Endothelial cell of umbilical vein (primary cell): ENCODE measurements at regions of chr10 and their contacts with region 1.

Region 1: GRCh38 chr10:70363971-70364771 is 18.3 kb downstream of the LRRC20 start:
- DNase-seq: peak; percentile 79
- H3K4me3 ChIP-seq: no peak overlapping the region
- H3K27ac ChIP-seq: no peak overlapping the region
- H3K4me1 ChIP-seq: no peaks in the 10 kb centered on the region
- H3K27me3 ChIP-seq: no peaks in the 10 kb centered on the region
- CTCF ChIP-seq: peak; percentile 82 to 95
- POLR2A ChIP-seq: no peak

Region 2: DNA sequence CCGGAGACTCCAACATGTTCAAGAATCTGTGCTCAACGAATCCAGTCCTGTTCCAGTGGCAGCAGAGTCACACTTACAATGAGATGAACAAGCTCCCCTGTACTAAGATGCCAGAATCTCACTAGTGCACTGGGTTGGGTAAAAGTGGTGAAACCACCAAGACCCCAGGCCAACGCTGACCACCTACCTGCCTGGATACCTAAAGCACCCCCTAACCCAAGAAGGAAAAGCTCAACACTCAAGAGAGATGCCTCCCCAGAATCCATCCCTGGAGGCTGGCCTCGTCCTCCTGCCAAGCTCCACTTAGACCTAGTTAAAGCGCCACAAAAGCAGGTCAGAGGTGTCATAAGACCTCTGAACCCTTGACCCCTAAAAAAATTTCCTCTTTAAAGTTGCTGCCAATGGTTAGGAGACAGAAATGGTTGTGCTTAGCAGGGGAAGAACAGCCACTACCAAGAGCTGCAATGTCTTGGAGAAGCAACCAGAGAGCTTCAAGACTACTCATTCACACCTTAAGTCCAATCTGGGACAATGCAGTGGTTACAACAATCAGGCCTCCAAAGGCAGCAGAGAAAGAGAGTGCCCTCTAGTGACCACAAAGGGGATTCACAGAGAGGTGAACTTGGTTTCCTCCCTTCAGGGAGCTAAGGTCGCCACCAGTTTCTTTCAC is 406.1 kb before region 1 on chr10:
- CTCF ChIA-PET with region 1: interaction called, 4 read pairs
- POLR2A ChIA-PET with region 1: no interaction called
- dilution Hi-C with region 1: no loop called
- intact Hi-C with region 1: loop called (anchors 10 kb)
- DNase-seq: peak; percentile 43
- H3K4me3 ChIP-seq: no peak overlapping the region
- H3K27ac ChIP-seq: no peak overlapping the region
- H3K4me1 ChIP-seq: no peaks in the 10 kb centered on the region
- H3K27me3 ChIP-seq: no peaks in the 10 kb centered on the region
- CTCF ChIP-seq: peak; percentile 85 to 90
- POLR2A ChIP-seq: no peak

Region 3: DNA sequence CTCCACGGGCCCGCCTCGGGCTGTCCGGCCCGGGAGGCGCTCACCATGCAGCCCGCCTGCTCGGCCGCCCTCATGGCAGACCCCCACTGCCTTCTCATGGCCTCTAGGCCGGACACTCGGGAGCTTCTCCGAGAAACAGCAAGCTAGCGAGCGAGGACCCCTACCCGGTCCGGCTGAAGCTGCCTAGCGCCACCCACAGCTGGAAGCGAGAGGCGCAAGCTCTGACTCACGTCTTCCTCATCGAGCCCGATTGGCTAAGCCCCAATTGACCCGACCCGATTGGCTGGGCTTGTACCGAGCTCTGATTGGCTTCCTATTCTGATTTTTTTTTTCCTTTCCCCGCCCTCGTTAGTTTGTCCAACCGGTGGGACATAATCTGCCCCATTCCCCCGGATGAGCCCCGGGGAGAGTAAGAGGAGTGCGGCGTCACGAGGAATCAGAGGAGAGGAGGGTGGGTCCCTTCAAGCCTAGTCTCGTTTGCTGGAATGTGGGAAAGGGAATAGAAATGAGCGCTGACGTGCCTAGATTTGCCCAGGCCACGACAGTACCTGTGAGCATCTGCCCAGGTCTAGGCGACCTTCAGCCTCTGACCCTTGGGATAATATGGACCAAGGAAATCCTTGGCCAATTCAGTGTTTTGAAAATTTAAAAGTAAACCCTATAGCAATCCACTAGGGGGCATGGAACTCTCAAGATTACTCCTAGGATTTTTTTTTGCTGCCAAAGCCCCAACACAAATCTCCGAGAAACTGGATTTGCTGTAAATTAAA is 217.5 kb before region 1 on chr10 and contains the start of gene TYSND1:
- CTCF ChIA-PET with region 1: interaction called, 25 read pairs
- POLR2A ChIA-PET with region 1: no interaction called
- dilution Hi-C with region 1: no loop called
- intact Hi-C with region 1: loop called (anchors 1 kb)
- DNase-seq: peak; percentile 98
- H3K4me3 ChIP-seq: peak within 1 kb of the TSS; percentile 58 to 64 (median 64)
- H3K27ac ChIP-seq: peak within 1 kb of the TSS; percentile 45
- H3K4me1 ChIP-seq: peaks cover 11% of the 10 kb centered on the region
- H3K27me3 ChIP-seq: no peaks in the 10 kb centered on the region
- CTCF ChIP-seq: peak; percentile 66 to 87
- POLR2A ChIP-seq: peak; percentile 91
- total RNA-seq, gene TYSND1: 6.7 and 7.8 TPM in 2 replicates

Region 4: GRCh38 chr10:70233109-70233938 is 130.8 kb before region 1 on chr10 and contains the start of gene PPA1:
- CTCF ChIA-PET with region 1: interaction called, 50 read pairs
- POLR2A ChIA-PET with region 1: interaction called, 3 read pairs
- dilution Hi-C with region 1: no loop called
- intact Hi-C with region 1: loop called (anchors 1 kb)
- DNase-seq: peak; percentile 96
- H3K4me3 ChIP-seq: peak within 1 kb of the TSS; percentile 72 to 91 (median 80)
- H3K27ac ChIP-seq: peak within 1 kb of the TSS; percentile 58
- H3K4me1 ChIP-seq: peaks cover 11% of the 10 kb centered on the region
- H3K27me3 ChIP-seq: no peaks in the 10 kb centered on the region
- CTCF ChIP-seq: peak in 1 of 2 donors; percentile 9
- POLR2A ChIP-seq: peak; percentile 95
- total RNA-seq, gene PPA1: 115 and 140 TPM in 2 replicates

Region 5: GRCh38 chr10:70267161-70267933 is 96.8 kb before region 1 on chr10:
- CTCF ChIA-PET with region 1: interaction called, 30 read pairs
- POLR2A ChIA-PET with region 1: no interaction called
- dilution Hi-C with region 1: no loop called
- intact Hi-C with region 1: loop called (anchors 2 kb)
- DNase-seq: peak; percentile 25
- H3K4me3 ChIP-seq: no peak overlapping the region
- H3K27ac ChIP-seq: no peak overlapping the region
- H3K4me1 ChIP-seq: peaks cover 2% of the 10 kb centered on the region
- H3K27me3 ChIP-seq: peaks cover 13% of the 10 kb centered on the region in 2 experiments
- CTCF ChIP-seq: peak; percentile 16 to 26
- POLR2A ChIP-seq: no peak

Region 6: GRCh38 chr10:70324339-70324861 is 39.8 kb before region 1 on chr10:
- CTCF ChIA-PET with region 1: no interaction called
- POLR2A ChIA-PET with region 1: no interaction called
- dilution Hi-C with region 1: no loop called
- intact Hi-C with region 1: no loop called
- DNase-seq: no peak
- H3K4me3 ChIP-seq: no peak overlapping the region
- H3K27ac ChIP-seq: no peak overlapping the region
- H3K4me1 ChIP-seq: no peaks in the 10 kb centered on the region
- H3K27me3 ChIP-seq: peaks cover 6 to 9% of the 10 kb centered on the region in 2 experiments
- CTCF ChIP-seq: no peak
- POLR2A ChIP-seq: no peak

Region 7: DNA sequence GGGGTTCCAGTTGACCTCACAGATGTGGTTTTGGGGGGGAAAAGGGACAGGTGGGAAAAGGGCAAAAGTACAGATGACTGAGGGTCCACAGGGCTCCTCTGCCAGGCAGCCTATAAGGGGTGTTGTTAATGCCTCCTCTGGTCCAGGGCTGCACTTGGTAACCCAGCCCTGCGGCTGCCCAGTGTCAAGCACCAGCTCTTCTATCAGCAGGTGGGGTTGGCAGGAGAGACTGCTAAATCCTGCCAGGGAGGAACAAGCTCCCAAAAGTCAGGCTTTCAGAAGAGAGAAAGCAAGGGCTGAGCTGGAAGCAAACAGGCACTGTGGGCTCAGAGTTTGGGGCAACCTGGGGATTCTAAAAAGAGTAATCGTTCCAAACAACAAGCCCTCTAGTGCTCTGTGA is 20.9 kb before region 1 on chr10:
- CTCF ChIA-PET with region 1: interaction called, 11 read pairs
- POLR2A ChIA-PET with region 1: no interaction called
- dilution Hi-C with region 1: no loop called
- intact Hi-C with region 1: no loop called
- DNase-seq: no peak
- H3K4me3 ChIP-seq: no peak overlapping the region
- H3K27ac ChIP-seq: no peak overlapping the region
- H3K4me1 ChIP-seq: no peaks in the 10 kb centered on the region
- H3K27me3 ChIP-seq: peaks cover 0 to 5% of the 10 kb centered on the region in 2 experiments
- CTCF ChIP-seq: no peak
- POLR2A ChIP-seq: no peak

Region 8: GRCh38 chr10:70381471-70382421 is 17.6 kb after region 1 on chr10:
- CTCF ChIA-PET with region 1: interaction called, 55 read pairs
- POLR2A ChIA-PET with region 1: no interaction called
- dilution Hi-C with region 1: no loop called
- intact Hi-C with region 1: no loop called
- DNase-seq: peak; percentile 55
- H3K4me3 ChIP-seq: peak overlapping the region; percentile 51 to 88 (median 82)
- H3K27ac ChIP-seq: peak overlapping the region; percentile 41
- H3K4me1 ChIP-seq: peaks cover 32% of the 10 kb centered on the region
- H3K27me3 ChIP-seq: peaks cover 0 to 3% of the 10 kb centered on the region in 2 experiments
- CTCF ChIP-seq: no peak
- POLR2A ChIP-seq: peak; percentile 57